ENCODE measurements at regions of chr12 and their contacts with region 1.

Region 1: GRCh38 chr12:57111031-57111734 is at the start of gene STAT6:
- DNase-seq: peak; percentile 59 to 75
- H3K4me3 ChIP-seq: peak within 1 kb of the TSS; percentile 81
- H3K27ac ChIP-seq: peak within 1 kb of the TSS; percentile 87
- H3K4me1 ChIP-seq: peaks cover 25% of the 10 kb centered on the region
- H3K27me3 ChIP-seq: no peaks in the 10 kb centered on the region
- CTCF ChIP-seq: no peak; the same call in 1 of the 2 replicates
- total RNA-seq, gene STAT6: 112 and 122 TPM in 2 replicates

Region 2: GRCh38 chr12:56243731-56244181 is 867.4 kb before region 1 on chr12:
- CTCF ChIA-PET with region 1: no interaction called
- POLR2A ChIA-PET with region 1: no interaction called
- intact Hi-C with region 1: no loop called
- DNase-seq: no peak
- H3K4me3 ChIP-seq: no peak overlapping the region
- H3K27ac ChIP-seq: no peak overlapping the region
- H3K4me1 ChIP-seq: no peaks in the 10 kb centered on the region
- H3K27me3 ChIP-seq: no peaks in the 10 kb centered on the region
- CTCF ChIP-seq: no peak

Region 3: DNA sequence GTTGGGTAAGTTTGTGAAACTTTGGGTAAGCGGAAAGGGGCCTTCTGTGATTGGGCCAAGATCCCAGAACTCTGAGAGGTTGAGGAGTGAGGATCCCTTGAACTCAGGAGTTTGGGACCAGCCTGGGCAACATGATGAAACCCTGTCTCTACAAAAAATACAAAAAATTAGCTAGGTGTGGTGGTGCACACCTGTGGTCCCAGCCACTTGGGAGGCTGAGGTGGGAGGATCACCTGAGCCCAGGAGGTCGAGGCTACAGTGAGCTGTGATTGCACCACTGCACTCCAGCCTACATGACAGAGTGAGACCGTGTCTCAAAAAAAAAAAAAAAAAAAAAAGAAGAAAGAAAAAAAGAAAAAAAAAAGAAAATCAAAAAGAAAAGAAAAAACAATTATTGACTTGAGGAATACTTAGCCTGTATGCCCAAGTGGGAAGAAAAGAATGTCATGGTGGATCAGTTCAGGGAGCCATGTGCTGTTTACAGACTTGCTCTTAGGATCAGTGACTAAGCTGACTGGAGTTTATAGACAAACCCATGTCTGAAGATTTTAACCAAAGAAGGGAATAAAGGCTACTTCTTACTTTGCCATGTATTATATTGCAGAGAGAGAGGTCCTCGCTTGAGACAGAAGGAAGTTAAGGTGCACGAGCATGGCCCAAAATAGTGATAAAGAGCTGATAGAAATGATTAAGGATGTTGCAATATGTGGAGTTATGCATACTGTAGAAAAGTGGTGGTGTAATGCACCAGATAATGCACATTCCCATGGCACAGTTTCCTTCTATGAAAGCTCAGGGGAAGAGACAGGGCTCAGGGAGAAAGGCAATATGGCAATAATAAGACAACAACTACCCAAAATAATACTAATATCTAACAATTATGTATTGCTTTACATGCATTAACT is 347.2 kb before region 1 on chr12:
- CTCF ChIA-PET with region 1: no interaction called
- POLR2A ChIA-PET with region 1: no interaction called
- intact Hi-C with region 1: loop called (anchors 5 kb)
- DNase-seq: peak in 1 of 2 experiments; percentile 54
- H3K4me3 ChIP-seq: no peak overlapping the region
- H3K27ac ChIP-seq: no peak overlapping the region
- H3K4me1 ChIP-seq: no peaks in the 10 kb centered on the region
- H3K27me3 ChIP-seq: no peaks in the 10 kb centered on the region
- CTCF ChIP-seq: no peak

Region 4: DNA sequence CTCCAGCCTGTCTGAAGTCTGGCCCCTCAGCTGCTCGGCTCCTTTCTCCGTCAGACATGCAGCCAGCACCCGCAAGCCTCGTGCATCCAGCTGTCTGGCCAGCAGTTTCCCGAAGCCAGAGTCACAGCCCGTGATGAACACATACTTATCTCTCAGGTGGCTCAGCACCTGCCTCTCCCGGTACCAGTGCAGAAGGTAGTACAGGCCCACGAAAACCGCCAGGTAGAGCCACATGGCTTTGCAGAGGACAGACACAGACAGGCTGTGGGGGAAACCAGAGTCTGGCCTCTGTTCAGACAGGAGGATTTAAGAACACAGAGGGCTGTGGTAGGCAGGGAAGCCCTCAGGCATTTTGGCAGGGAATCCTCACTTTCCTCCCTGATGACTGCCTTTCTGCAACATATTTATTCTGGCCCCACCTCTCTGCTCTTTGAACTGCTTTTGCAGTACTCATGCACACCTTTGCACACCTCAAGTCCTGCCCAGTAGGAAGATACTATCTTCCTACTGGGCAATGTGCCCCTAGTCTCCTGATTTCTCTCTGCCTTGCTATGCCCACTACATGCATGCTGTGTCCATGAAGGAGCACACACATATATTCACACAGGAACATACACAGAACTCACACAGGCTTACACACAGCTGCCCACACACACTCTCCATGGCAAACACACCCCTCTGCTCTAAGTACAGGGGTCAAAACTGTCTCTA is 153.8 kb before region 1 on chr12 and contains the start of gene RDH16:
- CTCF ChIA-PET with region 1: no interaction called
- POLR2A ChIA-PET with region 1: no interaction called
- intact Hi-C with region 1: no loop called
- DNase-seq: peak; percentile 64 to 66
- H3K4me3 ChIP-seq: no peak within 1 kb of the TSS
- H3K27ac ChIP-seq: no peak within 1 kb of the TSS
- H3K4me1 ChIP-seq: peaks cover 19% of the 10 kb centered on the region
- H3K27me3 ChIP-seq: no peaks in the 10 kb centered on the region
- CTCF ChIP-seq: no peak
- total RNA-seq, gene RDH16: 0.79 and 0.88 TPM in 2 replicates

Region 5: DNA sequence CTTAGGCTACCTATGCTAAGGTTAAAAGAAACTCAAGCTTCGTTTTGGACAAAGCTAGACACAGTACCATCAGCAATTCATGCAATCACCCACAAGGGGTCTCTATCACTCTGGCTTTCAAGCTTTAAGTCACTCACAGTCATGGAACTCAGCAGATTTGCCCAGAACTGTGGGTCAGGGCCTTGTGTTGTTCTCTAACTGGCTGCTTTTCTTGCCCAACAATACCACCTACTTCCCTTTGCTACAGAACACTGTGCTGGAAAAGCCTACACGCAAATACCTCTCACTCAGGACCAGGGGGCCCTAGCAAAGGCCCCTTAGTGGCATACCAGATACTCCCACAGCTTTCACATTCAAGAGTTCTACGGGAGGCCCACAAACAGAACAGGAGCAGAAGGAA is 41.7 kb before region 1 on chr12:
- CTCF ChIA-PET with region 1: interaction called, 25 read pairs
- POLR2A ChIA-PET with region 1: interaction called, 19 read pairs
- intact Hi-C with region 1: loop called (anchors 1 kb)
- DNase-seq: peak; percentile 31 to 60
- H3K4me3 ChIP-seq: no peak overlapping the region
- H3K27ac ChIP-seq: no peak overlapping the region
- H3K4me1 ChIP-seq: no peaks in the 10 kb centered on the region
- H3K27me3 ChIP-seq: no peaks in the 10 kb centered on the region
- CTCF ChIP-seq: peak; percentile 81

Region 6: DNA sequence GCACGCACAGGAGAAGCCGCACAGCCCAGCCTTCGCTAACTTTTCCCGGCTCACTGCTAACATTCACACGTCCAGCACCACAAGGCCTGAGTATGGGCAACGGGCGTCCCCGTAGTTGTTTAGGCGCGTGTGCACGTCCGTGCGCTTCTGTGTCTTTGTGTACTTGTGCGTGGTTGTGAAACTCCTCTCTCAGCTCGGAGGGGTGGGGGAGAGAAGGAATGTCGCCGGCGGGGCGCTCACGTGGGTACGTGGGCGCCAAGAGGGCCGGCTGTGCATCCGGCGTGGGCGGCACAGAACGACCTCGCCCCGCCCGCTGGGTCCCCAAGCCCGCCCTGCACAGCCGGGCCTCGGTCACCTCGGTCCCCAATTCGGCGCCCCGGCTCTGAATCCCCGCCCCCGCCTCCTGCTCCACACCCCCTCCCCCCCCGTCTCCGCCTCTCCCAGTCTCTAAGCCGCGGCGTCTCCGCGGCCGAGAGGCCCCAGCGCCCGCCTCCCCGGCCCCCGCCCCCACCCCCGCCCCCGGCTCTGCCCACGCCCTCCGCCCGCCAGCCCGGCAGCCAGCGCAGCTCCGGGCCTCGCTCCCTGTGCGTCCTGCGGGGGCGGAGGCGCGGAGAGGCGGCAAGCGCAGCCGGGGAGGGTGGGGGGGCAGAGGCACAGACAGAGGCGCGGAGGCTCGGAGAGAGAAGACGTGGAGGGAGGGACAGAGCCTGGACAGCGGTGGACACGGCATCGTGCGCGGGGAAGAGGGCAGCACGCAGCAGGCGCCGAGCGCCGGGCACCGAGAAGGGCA is 22.5 kb before region 1 on chr12 and contains the start of gene NAB2:
- CTCF ChIA-PET with region 1: interaction called, 12 read pairs
- POLR2A ChIA-PET with region 1: interaction called, 28 read pairs
- intact Hi-C with region 1: loop called (anchors 1 kb)
- DNase-seq: peak; percentile 82 to 95
- H3K4me3 ChIP-seq: peak within 1 kb of the TSS; percentile 94
- H3K27ac ChIP-seq: peak within 1 kb of the TSS; percentile 91
- H3K4me1 ChIP-seq: peaks cover 5% of the 10 kb centered on the region; the same call in 1 of the 2 replicates
- H3K27me3 ChIP-seq: no peaks in the 10 kb centered on the region
- CTCF ChIP-seq: no peak
- total RNA-seq, gene NAB2: 13.8 and 20.2 TPM in 2 replicates

Region 7: GRCh38 chr12:57130941-57131340 is 19.8 kb after region 1 on chr12:
- CTCF ChIA-PET with region 1: interaction called, 22 read pairs
- POLR2A ChIA-PET with region 1: interaction called, 19 read pairs
- intact Hi-C with region 1: no loop called
- DNase-seq: no peak
- H3K4me3 ChIP-seq: no peak overlapping the region
- H3K27ac ChIP-seq: no peak overlapping the region
- H3K4me1 ChIP-seq: peaks cover 8% of the 10 kb centered on the region
- H3K27me3 ChIP-seq: no peaks in the 10 kb centered on the region
- CTCF ChIP-seq: no peak

Region 8: DNA sequence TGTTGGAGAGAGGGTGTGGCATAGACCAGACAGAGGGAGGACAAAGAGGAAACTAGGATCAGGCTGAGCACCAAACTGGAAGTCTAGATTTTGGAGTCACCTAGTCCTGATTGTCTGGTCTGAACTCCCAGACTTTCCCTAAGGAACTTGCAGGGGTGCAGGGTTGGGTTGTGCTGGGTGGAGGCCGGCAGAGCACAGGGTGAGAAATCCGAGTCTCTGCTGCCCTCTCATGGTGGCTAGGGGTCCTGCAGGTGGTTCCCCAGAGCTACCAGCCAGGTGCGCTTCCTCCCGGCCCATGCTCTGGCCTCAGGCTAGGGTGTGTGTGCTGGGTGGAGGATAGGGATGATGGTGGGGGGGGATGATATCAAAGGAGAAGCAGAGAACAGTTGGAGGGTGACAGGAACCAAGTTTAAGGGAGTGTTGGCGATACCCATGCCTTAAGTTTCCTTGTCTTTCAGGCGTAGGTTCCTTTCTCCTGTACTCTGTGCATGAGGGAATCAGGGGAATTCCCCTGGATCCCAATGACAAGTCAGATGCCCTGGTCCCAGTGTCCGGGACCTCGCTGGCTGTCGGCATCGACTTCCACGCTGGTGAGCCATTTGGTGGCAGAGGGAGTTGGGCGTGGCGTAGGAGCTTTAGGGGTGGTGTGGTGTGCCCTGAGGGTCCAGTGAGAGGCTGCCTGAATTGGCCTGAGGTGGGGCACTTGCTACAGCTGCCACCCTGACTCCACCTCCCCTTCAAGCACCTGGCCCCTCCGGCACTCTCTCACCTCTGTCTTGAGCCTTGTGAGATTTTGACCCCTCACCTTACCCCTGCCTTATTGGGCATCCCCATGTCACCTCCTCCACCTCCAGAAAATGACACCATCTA is 72.0 kb after region 1 on chr12:
- CTCF ChIA-PET with region 1: interaction called, 3 read pairs
- POLR2A ChIA-PET with region 1: interaction called, 10 read pairs
- intact Hi-C with region 1: no loop called
- DNase-seq: peak; percentile 56 to 82
- H3K4me3 ChIP-seq: no peak overlapping the region
- H3K27ac ChIP-seq: no peak overlapping the region
- H3K4me1 ChIP-seq: no peaks in the 10 kb centered on the region
- H3K27me3 ChIP-seq: no peaks in the 10 kb centered on the region
- CTCF ChIP-seq: peak; percentile 92

Region 9: DNA sequence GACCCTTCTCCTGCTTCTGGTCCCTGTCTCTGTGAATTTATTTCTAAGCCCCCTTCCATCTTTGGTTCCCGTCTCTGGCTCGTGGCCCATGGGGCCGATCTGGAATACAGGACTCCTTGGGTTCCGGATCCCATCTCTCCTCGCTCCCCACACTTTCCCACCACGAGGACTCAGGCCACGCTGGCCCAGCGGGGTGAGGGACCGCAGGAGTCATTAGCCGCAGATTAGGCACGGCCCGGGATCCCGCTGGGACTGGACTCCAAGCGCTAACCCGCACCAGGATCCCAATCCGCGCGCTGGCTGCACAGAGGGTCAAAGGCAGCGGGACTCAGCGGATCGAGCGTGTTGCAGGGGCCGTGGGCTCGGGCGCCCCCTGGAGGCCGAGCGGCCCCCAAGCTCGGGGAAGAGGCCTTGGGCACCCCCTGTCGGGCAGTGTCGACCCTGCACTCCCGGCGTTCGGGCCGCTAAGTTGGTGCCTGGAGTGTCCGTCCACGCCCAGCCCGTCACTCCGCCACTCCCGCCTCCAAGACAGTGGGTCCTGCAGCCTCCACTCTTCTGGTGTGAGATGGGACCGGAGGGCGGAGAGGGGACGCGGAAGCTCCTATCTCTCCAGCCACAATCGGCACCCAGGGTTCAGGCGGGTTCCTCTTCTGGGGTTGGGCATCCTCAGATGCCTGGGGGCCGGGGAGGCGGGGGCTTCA is 127.8 kb after region 1 on chr12:
- CTCF ChIA-PET with region 1: no interaction called
- POLR2A ChIA-PET with region 1: interaction called, 12 read pairs
- intact Hi-C with region 1: loop called (anchors 5 kb)
- DNase-seq: peak; percentile 48 to 89
- H3K4me3 ChIP-seq: peak overlapping the region; percentile 51; the same call in 1 of the 2 replicates
- H3K27ac ChIP-seq: no peak overlapping the region
- H3K4me1 ChIP-seq: peaks cover 22% of the 10 kb centered on the region; the same call in 1 of the 2 replicates
- H3K27me3 ChIP-seq: peaks cover 30% of the 10 kb centered on the region
- CTCF ChIP-seq: peak; percentile 97

Region 10: DNA sequence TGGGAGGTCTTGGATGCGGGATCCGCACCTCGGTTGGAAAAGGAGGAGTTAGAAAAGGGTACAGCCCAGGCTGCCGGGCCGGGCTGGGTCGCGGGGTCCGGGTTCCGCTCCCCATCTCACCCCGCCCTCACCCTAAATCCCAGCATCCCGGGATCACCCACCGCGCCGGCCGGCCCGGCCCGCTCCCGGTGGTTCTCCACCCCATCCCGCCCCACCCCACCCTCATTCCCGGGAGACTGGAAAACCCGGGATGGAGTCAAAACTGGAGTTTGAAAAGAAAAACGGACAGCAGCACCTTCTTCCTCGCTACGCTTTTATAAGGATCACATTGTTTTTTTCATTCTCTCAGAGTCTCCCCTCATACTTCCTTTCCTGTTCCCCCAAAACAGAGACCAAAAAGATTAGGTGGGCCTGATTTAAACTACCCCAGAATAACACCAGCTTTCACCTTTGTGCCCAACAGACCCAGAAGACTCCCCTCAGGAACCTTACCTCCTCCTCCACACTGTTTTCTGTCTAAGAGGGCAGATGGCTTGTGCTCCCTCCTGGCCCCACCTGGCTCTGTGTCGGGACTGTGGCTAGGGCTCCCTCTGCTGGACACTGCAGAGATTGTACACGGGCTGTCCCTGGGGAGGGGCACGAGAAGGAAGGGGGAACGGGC is 351.2 kb after region 1 on chr12:
- CTCF ChIA-PET with region 1: no interaction called
- POLR2A ChIA-PET with region 1: no interaction called
- intact Hi-C with region 1: no loop called
- DNase-seq: peak; percentile 74 to 88
- H3K4me3 ChIP-seq: peak overlapping the region; percentile 57
- H3K27ac ChIP-seq: no peak overlapping the region
- H3K4me1 ChIP-seq: peaks cover 23% of the 10 kb centered on the region
- H3K27me3 ChIP-seq: peaks cover 62% of the 10 kb centered on the region
- CTCF ChIP-seq: peak; percentile 92

Measured in PC-9 (cell line).